Activated T-helper 2 cell treated with anti-CD3 and anti-CD28 coated beads, Interferon-gamma antibody, Interleukin-2, Interleukin-4, amounts not matched to agents 10 μg/mL and 5 μg/mL and 100 μg/mL, durations not matched to agents 14 hours and 24 hours and 36 hours (primary cell): ENCODE measurements at regions of chr4 and their contacts with region 1.

Region 1: DNA sequence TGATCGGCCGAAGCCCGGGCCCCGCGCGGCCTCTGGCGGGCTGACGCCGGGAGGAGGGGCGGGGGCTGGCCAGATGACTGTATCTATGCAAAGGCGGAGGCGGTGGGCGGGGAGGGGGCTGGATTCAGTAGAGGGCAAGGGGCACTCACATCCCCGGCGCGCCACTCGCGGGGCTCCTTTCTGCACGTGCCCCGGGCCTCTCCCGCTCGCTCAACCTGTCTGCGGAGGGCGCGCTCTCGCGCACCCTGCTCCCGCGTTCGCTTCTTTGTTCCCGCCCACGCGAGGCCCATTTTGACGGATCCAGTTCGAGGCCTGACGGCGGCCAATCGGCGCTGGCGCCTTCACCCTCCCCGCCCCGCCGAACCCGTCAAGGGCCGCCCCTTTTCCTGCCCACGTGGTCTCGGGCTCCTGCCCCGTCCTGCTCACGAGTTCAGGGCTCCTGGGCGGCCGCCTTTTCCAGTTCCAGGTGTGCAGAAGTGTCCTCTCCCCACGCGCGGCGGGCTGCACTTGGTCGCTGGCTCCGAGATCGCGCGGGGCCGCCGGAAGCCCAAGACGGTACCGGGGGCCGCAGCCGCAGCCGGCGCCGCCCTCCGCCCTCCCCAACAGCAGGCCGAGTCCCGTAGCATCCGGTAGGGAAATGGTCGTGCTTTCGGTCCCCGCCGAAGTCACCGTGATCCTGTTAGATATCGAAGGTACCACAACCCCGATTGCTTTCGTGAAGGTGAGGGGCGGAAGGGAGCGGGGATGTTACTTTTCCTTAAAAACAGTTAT is at the starts of genes ENOPH1 and HNRNPDL:
- DNase-seq: peak; percentile 96
- H3K4me3 Mint-ChIP-seq: peak within 1 kb of the TSS; percentile 98
- H3K27ac Mint-ChIP-seq: peak within 1 kb of the TSS; percentile 99
- H3K4me1 Mint-ChIP-seq: peaks cover 44% of the 10 kb centered on the region
- H3K27me3 Mint-ChIP-seq: no peaks in the 10 kb centered on the region
- total RNA-seq, gene ENOPH1: 64.5 and 65.9 TPM in 2 replicates
- total RNA-seq, gene HNRNPDL: 470 and 486 TPM in 2 replicates

Region 2: GRCh38 chr4:82284858-82285805 is 145.2 kb before region 1 on chr4:
- intact Hi-C with region 1: loop called (anchors 1 kb)
- DNase-seq: peak; percentile 99
- H3K4me3 Mint-ChIP-seq: peak overlapping the region; percentile 76
- H3K27ac Mint-ChIP-seq: no peak overlapping the region
- H3K4me1 Mint-ChIP-seq: peaks cover 12% of the 10 kb centered on the region
- H3K27me3 Mint-ChIP-seq: peaks cover 26% of the 10 kb centered on the region

Region 3: GRCh38 chr4:82462415-82462831 is 32.0 kb after region 1 on chr4:
- intact Hi-C with region 1: loop called (anchors 2 kb)
- DNase-seq: peak; percentile 72
- H3K4me3 Mint-ChIP-seq: no peak overlapping the region
- H3K27ac Mint-ChIP-seq: no peak overlapping the region
- H3K4me1 Mint-ChIP-seq: peaks cover 3% of the 10 kb centered on the region
- H3K27me3 Mint-ChIP-seq: no peaks in the 10 kb centered on the region

Region 4: GRCh38 chr4:82484996-82485783 is 54.8 kb after region 1 on chr4:
- intact Hi-C with region 1: no loop called
- DNase-seq: no peak
- H3K4me3 Mint-ChIP-seq: no peak overlapping the region
- H3K27ac Mint-ChIP-seq: no peak overlapping the region
- H3K4me1 Mint-ChIP-seq: no peaks in the 10 kb centered on the region
- H3K27me3 Mint-ChIP-seq: no peaks in the 10 kb centered on the region

Region 5: DNA sequence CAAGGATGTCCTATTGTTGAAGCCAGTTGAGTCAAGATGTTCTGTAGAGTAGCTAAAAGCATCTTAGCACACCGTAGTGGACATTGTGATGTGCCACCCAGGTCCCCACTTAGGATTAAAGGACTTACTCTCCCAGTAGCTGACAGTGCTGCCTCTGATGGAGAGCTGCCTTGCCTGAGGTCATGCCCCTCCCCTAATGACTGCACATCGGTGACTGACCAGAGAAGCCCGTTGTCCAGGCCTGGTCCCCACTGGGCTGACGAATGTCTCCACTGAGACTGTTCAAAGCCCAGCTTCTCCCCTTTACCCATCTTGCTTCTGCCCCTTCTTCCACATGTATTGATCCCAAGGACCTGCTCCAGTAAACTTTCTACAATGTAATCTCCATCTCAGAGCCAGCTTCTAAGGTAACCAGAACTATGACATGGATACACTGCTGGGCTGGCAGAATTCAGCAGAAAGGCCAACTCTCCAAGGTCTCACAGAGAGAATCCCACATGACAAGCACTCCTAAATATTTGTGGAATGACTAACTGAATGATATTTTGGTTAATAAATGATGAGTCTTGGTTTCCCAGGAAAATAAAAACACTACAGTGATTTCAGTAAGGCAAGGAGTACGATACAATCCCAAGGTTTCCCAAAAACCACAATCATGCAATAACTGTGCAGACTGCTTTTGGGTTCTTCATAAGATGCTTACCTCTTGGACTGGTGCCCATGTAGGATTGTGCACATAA is 213.8 kb after region 1 on chr4:
- intact Hi-C with region 1: no loop called
- DNase-seq: no peak
- H3K4me3 Mint-ChIP-seq: no peak overlapping the region
- H3K27ac Mint-ChIP-seq: no peak overlapping the region
- H3K4me1 Mint-ChIP-seq: no peaks in the 10 kb centered on the region
- H3K27me3 Mint-ChIP-seq: no peaks in the 10 kb centered on the region

Region 6: DNA sequence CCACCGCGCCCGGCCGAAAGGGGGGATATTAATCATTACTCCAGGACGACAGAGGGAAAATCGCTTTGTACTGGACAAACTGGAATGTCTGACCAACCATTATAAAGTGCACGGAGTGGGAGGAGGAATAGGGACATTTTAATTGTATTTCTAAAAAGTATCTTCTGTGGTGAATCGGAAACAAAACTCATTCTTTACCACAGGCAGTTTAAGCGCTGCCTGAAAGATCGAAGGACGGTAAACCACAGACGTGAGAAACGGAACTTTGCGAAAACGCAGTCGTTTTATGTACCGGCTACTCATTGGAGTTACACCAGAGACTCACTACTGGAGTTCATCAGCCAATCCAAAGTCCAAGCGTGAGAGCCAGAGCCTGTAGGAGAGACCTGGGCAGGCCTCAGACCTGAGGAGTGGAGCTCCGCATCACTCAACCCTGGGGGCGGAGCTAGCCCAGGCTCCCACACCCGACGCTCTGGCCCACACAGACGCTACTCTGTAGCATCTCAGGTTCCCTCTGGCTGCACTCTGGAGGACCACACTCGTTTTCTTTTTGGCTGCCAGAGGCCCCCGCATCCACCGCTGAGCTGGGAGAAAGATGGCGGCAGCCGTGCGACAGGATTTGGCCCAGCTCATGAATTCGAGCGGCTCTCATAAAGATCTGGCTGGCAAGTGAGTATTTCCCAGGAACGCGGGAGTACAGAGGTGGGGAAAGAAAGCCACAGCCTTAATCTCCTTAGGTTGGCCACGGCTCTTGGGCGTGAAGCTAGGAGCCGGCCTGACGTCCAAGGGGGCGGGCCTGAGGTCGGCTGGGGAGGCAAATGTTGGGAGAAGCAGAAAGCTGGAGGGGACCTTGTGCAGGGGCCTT is 604.5 kb after region 1 on chr4 and contains the start of gene COPS4:
- intact Hi-C with region 1: loop called (anchors 1 kb)
- DNase-seq: peak; percentile 96
- H3K4me3 Mint-ChIP-seq: peak within 1 kb of the TSS; percentile 98
- H3K27ac Mint-ChIP-seq: peak within 1 kb of the TSS; percentile 100
- H3K4me1 Mint-ChIP-seq: peaks cover 18% of the 10 kb centered on the region
- H3K27me3 Mint-ChIP-seq: peaks cover 4% of the 10 kb centered on the region
- total RNA-seq, gene COPS4: 33.7 and 35.2 TPM in 2 replicates